AG04449 (cell line): ENCODE measurements at regions of chr19 and their contacts with region 1.

Region 1: DNA sequence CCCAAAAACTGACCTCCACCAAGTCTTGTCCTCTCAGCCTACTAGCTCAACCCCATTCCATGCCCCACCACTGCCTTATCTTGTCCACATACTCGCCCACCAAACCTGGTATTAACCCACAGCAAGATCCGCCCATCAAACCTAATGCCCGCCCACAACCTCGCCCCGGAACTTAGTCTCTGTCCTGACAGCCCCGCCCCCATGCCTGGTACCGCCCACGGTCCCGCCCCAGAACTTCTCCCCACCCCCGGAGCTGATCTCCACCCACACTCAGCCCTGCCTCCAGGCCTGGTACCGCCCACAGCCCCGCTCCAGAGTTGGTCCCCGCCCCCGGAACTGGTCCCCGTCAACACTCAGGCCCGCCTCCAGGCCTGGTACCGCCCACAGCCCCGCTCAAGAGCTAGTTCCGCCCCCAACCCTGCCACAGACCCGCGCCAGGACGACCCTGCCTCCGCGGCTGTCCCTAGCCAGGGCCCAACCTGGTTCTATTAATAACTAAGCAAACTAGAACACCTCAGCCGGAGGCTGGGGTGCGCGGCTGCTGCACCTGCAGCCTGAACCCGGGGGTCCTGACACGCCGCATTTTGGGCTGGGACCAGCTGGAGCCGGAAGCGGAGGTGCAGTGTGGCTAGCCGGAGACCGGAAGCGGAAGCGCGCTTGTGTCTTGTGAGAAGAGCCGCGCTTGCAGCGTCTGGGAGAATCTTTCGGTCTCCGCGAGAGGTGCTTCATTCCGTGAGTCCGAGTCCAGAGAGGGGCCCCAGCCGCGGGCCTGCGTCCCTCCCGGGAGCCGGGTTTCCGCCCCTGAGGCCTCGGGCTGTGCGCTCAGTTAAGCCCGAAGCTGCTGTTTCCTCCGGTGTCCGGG is at the start of gene ZNF557:
- DNase-seq: peak; percentile 58
- H3K4me3 ChIP-seq: peak within 1 kb of the TSS; percentile 93
- CTCF ChIP-seq: no peak

Region 2: DNA sequence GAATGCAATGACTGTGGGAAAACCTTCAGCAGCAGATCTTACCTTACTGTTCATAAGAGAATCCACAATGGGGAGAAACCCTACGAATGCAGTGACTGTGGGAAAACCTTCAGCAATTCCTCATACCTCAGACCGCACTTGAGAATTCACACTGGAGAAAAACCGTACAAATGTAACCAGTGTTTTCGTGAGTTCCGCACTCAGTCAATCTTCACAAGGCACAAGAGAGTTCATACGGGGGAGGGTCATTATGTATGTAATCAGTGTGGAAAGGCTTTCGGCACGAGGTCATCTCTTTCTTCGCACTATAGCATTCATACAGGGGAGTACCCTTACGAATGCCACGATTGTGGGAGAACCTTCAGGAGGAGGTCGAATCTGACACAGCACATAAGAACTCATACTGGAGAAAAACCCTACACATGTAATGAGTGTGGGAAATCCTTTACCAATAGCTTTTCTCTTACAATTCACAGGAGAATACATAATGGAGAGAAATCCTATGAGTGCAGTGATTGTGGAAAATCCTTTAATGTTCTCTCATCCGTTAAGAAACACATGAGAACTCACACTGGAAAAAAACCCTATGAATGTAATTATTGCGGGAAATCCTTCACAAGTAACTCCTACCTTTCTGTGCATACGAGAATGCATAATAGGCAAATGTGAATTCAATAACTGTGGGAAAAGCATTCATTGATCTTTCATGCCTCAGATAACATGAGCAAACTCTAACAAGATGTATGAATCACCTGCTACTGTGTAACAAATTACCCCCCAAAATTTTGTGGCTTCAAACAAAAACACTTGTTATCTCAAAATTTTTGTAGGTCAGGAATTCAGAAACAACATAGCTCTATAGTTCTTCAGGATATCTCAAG is 14.0 kb after region 1 on chr19:
- CTCF ChIA-PET with region 1: interaction called, 10 read pairs
- POLR2A ChIA-PET with region 1: interaction called, 4 read pairs
- DNase-seq: no peak
- H3K4me3 ChIP-seq: no peak overlapping the region
- CTCF ChIP-seq: no peak